ENCODE measurements at regions of chr11 and their contacts with region 1.

Region 1: DNA sequence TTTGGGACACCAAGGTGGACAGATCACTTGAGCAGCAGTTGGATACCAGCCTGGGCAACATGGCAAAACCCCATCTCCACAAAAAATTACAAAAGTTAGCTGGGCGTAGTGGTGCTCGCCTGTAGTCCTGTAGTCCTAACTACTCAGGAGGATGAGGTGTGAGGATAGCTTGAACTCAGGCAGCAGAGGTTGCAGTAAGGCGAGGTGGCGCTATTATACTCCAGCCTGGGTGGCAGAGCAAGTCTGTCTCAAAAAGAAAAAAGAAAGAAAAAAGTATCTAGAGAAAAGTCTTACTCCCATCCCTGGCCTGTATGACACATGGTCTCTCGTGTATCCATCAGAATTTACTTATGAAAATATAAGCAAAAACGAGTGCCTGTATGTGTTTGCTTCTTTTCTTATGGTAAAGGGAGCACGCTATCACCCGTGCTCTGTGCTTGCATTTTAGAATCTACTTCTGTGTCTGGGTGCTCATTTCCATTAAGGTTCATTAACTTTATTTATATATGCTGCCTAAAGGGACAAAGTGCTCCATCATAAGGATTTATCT is 15.4 kb upstream of the CPT1A start:
- DNase-seq: no peak
- H3K4me3 ChIP-seq: no peak overlapping the region
- H3K27ac ChIP-seq: peak overlapping the region; percentile 60 to 82 (median 74)
- H3K4me1 ChIP-seq: peaks cover 20 to 37% (median 32%) of the 10 kb centered on the region in 4 donors
- H3K27me3 ChIP-seq: peaks cover 18% of the 10 kb centered on the region
- CTCF ChIP-seq: no peak
- EP300 ChIP-seq: no peak
- POLR2A ChIP-seq: no peak

Region 2: DNA sequence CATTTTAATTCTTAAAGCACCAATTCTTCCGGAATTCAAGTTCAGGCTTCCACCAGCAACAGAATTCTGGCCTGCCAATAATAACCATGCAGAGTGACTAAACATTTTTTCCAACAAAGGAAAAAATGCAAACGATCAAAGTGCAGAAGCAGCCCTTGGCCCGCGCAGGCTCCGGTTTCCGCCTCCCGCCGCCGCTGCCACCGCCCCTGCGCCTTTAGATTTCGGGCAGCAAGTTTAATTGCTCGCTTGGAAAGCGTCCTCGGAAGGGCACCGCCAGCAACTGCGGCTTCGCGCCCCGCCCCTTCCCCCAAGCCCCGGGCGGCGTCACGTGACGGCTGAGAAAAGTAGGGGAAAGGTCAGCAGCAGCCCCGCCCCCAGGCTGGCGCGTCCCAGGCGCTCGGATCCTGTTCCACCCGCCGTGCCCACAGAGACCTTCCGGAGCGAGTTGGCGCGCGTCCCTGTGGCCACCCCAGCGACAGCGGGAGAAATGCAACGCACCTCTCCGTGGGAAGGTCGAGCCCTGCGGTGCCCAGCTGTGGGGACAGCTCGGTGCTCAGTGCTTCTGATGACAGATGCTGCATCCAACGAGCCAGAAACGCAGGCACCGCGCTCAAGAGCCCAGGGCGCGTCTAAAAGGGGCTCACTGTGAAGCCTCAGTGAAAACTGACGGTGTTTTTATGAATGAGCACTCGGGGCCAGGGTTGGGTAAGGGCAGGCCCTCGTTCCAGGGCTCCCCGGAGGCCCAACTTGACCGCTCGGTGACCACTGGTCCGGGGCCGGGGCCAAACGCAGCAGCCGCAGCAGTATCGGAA is 17.9 kb before region 1 on chr11:
- in situ Hi-C with region 1: no loop called
- intact Hi-C with region 1: loop called (anchors 2 kb)
- DNase-seq: peak; percentile 98
- H3K4me3 ChIP-seq: peak overlapping the region; percentile 23 to 91 (median 62)
- H3K27ac ChIP-seq: peak overlapping the region; percentile 89 to 99 (median 99)
- H3K4me1 ChIP-seq: peaks cover 49 to 83% (median 78%) of the 10 kb centered on the region in 4 donors
- H3K27me3 ChIP-seq: no peaks in the 10 kb centered on the region
- CTCF ChIP-seq: peak in 1 of 5 experiments; percentile 30
- EP300 ChIP-seq: peak; percentile 78
- POLR2A ChIP-seq: peak; percentile 87

Measured in transverse colon (tissue), 4 donors.